Endothelial cell of umbilical vein (primary cell): ENCODE measurements at regions of chr7 and their contacts with region 1.

Region 1: GRCh38 chr7:142811154-142811737 is 40.5 kb downstream of the PRSS2 start:
- DNase-seq: peak; percentile 63
- H3K4me3 ChIP-seq: no peak overlapping the region
- H3K27ac ChIP-seq: no peak overlapping the region
- H3K4me1 ChIP-seq: peaks cover 50% of the 10 kb centered on the region
- H3K27me3 ChIP-seq: no peaks in the 10 kb centered on the region
- CTCF ChIP-seq: peak; percentile 39 to 59
- POLR2A ChIP-seq: no peak

Region 2: GRCh38 chr7:142516038-142516501 is 295.2 kb before region 1 on chr7:
- CTCF ChIA-PET with region 1: interaction called, 11 read pairs
- POLR2A ChIA-PET with region 1: no interaction called
- dilution Hi-C with region 1: no loop called
- intact Hi-C with region 1: no loop called
- DNase-seq: peak; percentile 65
- H3K4me3 ChIP-seq: no peak overlapping the region
- H3K27ac ChIP-seq: no peak overlapping the region
- H3K4me1 ChIP-seq: no peaks in the 10 kb centered on the region
- H3K27me3 ChIP-seq: peaks cover 9 to 13% of the 10 kb centered on the region in 2 experiments
- CTCF ChIP-seq: peak; percentile 75 to 79
- POLR2A ChIP-seq: no peak

Region 3: DNA sequence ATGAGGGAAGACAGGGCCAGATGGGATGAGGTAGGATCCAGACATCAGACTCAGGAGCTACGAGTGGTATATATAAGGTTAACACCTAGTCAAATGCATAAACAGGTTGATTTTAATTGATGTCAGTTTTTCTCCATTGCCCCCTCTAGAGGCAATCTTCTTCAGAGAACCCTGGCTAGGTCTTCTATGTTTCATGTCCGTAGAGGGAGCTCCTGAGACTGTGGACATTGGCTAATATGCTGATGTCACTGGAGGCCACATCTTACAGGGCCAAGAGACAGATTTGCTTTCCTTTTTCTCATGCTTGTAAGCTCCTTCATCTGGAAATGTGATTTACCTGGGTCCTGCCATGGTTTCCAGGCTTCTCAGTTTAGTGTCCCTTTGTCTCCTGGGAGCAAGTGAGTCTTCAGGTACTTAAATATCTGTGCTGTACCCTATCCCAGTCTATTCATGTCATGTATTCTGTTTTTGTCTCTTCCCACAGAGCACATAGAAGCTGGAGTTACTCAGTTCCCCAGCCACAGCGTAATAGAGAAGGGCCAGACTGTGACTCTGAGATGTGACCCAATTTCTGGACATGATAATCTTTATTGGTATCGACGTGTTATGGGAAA is 223.6 kb before region 1 on chr7:
- CTCF ChIA-PET with region 1: interaction called, 13 read pairs
- POLR2A ChIA-PET with region 1: no interaction called
- dilution Hi-C with region 1: no loop called
- intact Hi-C with region 1: no loop called
- DNase-seq: peak; percentile 66
- H3K4me3 ChIP-seq: no peak overlapping the region
- H3K27ac ChIP-seq: no peak overlapping the region
- H3K4me1 ChIP-seq: peaks cover 10% of the 10 kb centered on the region
- H3K27me3 ChIP-seq: no peaks in the 10 kb centered on the region
- CTCF ChIP-seq: peak; percentile 63 to 82
- POLR2A ChIP-seq: no peak

Region 4: GRCh38 chr7:142654398-142654797 is 156.8 kb before region 1 on chr7:
- CTCF ChIA-PET with region 1: interaction called, 22 read pairs
- POLR2A ChIA-PET with region 1: no interaction called
- dilution Hi-C with region 1: no loop called
- intact Hi-C with region 1: no loop called
- DNase-seq: no peak
- H3K4me3 ChIP-seq: no peak overlapping the region
- H3K27ac ChIP-seq: no peak overlapping the region
- H3K4me1 ChIP-seq: no peaks in the 10 kb centered on the region
- H3K27me3 ChIP-seq: peaks cover 12 to 16% of the 10 kb centered on the region in 2 experiments
- CTCF ChIP-seq: peak in 1 of 2 donors; percentile 4
- POLR2A ChIP-seq: no peak

Region 5: DNA sequence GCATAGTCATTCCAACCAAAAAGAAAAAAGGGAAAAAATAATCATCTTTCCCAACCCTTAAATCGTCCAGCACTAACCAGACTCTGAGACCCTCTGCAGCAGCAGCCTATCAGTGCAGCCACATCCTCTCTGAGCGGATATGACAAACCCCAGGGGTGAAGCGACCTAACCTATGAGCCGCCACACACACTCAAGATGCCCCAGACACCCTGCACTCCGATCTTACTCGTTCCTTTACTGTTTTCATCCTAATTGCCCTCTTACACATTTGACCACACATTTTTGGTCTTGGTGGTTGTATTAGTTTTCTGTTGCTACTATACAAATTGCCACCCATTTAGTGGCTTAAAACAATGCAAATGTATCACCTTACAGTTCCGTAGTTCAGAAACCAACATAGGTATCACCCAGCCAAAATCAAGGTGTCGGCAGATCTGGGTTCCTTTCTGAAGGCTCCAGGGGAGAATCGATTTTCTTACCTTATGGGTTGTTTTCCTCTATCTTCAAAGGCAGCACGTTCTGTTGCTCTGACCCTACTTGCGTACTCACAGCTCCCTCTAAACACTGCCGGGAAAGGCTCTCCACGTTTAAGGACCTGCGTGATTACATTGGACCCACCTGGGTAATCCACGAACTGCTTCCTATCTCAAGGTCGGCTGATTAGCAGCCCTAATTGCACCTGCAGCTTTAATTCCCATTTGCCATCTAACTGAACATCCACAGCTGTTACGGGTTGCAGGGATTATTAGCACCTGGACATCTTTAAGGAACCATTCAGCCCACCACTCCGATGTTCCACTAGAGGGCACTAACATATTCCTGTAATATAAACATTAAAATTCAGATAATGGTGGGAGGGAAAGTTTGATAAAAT is 99.3 kb before region 1 on chr7:
- CTCF ChIA-PET with region 1: interaction called, 23 read pairs
- POLR2A ChIA-PET with region 1: no interaction called
- dilution Hi-C with region 1: no loop called
- intact Hi-C with region 1: loop called (anchors 1 kb)
- DNase-seq: peak; percentile 44
- H3K4me3 ChIP-seq: no peak overlapping the region
- H3K27ac ChIP-seq: no peak overlapping the region
- H3K4me1 ChIP-seq: peaks cover 20% of the 10 kb centered on the region
- H3K27me3 ChIP-seq: peaks cover 7 to 16% of the 10 kb centered on the region in 2 experiments
- CTCF ChIP-seq: peak; percentile 52 to 69
- POLR2A ChIP-seq: no peak

Region 6: DNA sequence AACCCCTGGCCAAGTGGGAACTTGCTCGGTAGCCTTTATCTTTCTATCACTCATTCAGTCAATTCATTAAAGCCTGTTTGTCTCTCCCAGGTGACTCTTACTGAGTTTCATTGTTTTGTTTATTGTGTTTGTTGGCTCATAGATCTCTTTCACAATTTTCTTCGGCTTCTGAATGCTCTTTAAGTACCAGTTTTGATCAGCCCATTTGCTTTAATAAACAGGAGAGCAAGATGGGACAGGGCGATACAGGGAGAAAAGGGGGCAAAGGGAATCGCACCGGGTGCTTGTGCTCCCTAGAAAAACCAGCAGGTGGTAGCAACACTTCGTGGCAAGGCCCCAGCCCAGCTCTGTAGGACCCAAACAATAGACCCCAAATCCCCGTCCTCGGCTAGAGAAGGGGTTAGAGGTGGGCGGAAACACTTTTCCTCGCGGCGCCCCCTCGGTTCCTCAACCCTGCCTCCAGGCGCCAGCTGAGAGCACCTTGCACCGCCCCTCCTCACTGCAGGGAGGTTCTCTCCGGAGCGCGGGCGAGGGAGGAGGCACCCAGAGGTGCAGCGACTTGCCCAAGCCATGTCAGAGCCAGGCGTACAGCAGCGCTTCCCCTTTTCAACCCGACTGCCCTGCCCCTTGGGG is 42.6 kb after region 1 on chr7:
- CTCF ChIA-PET with region 1: interaction called, 3 read pairs
- POLR2A ChIA-PET with region 1: no interaction called
- dilution Hi-C with region 1: no loop called
- intact Hi-C with region 1: loop called (anchors 2 kb)
- DNase-seq: peak; percentile 77
- H3K4me3 ChIP-seq: peak overlapping the region; percentile 48 to 73 (median 65)
- H3K27ac ChIP-seq: no peak overlapping the region
- H3K4me1 ChIP-seq: peaks cover 3% of the 10 kb centered on the region
- H3K27me3 ChIP-seq: peaks cover 7 to 10% of the 10 kb centered on the region in 2 experiments
- CTCF ChIP-seq: peak; percentile 67 to 87
- POLR2A ChIP-seq: no peak

Region 7: DNA sequence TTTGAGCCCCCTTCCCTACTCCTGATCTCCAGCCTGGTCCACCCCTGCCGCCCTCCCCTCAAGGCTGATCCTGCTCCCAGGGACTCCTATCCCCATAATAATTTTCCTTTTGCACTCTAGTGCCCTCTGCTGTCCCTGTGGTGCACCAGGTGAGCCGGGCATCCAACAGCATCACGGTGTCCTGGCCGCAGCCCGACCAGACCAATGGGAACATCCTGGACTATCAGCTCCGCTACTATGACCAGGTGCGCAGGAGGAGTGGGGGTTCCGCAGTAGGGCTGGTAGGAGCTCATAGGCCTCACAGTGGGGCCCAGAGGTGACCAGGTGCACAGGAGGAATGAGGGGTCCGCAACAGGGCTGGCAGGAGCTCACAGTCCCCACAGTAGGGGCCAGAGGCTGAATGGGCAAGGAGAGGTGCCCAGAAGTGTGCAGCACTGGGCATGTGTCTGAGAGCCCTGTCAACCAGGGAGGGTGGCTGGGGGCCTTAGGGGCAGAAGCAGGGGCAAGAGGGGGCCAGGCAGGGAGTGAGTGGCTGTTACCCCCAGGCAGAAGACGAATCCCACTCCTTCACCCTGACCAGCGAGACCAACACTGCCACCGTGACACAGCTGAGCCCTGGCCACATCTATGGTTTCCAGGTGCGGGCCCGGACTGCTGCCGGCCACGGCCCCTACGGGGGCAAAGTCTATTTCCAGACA is 55.3 kb after region 1 on chr7:
- CTCF ChIA-PET with region 1: no interaction called
- POLR2A ChIA-PET with region 1: no interaction called
- dilution Hi-C with region 1: no loop called
- intact Hi-C with region 1: no loop called
- DNase-seq: peak; percentile 29
- H3K4me3 ChIP-seq: no peak overlapping the region
- H3K27ac ChIP-seq: no peak overlapping the region
- H3K4me1 ChIP-seq: no peaks in the 10 kb centered on the region
- H3K27me3 ChIP-seq: no peaks in the 10 kb centered on the region
- CTCF ChIP-seq: peak; percentile 39 to 64
- POLR2A ChIP-seq: no peak